PC-9 (cell line): ENCODE measurements at regions of chr1 and their contacts with region 1.

Region 1: DNA sequence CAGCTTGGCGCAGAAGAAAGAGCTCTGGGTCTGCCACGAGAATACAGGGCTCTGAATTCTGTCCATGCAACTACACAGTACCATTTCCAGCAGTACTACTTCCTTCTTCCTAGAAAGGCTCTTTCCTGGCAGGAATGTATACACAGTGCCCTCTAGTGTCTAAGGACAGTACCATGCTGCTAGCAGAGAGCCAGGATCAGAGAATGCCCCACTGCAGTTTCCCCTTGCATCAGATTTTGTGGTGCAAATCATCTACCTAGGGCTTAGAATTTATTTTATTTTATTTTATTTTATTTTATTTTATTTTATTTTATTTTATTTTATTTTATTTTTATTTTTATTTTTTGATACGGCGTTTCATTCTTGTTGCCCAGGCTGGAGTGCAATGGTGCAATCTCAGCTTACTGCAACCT is 50.8 kb downstream of the PAX7 start:
- DNase-seq: peak in 1 of 2 experiments; percentile 59
- H3K4me3 ChIP-seq: no peak overlapping the region
- H3K27ac ChIP-seq: no peak overlapping the region
- H3K4me1 ChIP-seq: no peaks in the 10 kb centered on the region
- H3K27me3 ChIP-seq: no peaks in the 10 kb centered on the region
- CTCF ChIP-seq: peak; percentile 74

Region 2: GRCh38 chr1:18597160-18598042 is 84.0 kb before region 1 on chr1:
- CTCF ChIA-PET with region 1: no interaction called
- POLR2A ChIA-PET with region 1: no interaction called
- intact Hi-C with region 1: loop called (anchors 2 kb)
- DNase-seq: peak in 1 of 2 experiments; percentile 53
- H3K4me3 ChIP-seq: no peak overlapping the region
- H3K27ac ChIP-seq: no peak overlapping the region
- H3K4me1 ChIP-seq: no peaks in the 10 kb centered on the region
- H3K27me3 ChIP-seq: peaks cover 18% of the 10 kb centered on the region; the same call in 1 of the 2 replicates
- CTCF ChIP-seq: peak; percentile 93

Region 3: GRCh38 chr1:18703041-18703641 is 21.7 kb after region 1 on chr1:
- CTCF ChIA-PET with region 1: no interaction called
- POLR2A ChIA-PET with region 1: no interaction called
- intact Hi-C with region 1: no loop called
- DNase-seq: no peak
- H3K4me3 ChIP-seq: no peak overlapping the region
- H3K27ac ChIP-seq: no peak overlapping the region
- H3K4me1 ChIP-seq: no peaks in the 10 kb centered on the region
- H3K27me3 ChIP-seq: peaks cover 13% of the 10 kb centered on the region; the same call in 1 of the 2 replicates
- CTCF ChIP-seq: no peak